Activated CD4-positive, alpha-beta T cell treated with anti-CD3 and anti-CD28 coated beads for 36 hours (primary cell): ENCODE measurements at regions of chr14 and their contacts with region 1.

Region 1: DNA sequence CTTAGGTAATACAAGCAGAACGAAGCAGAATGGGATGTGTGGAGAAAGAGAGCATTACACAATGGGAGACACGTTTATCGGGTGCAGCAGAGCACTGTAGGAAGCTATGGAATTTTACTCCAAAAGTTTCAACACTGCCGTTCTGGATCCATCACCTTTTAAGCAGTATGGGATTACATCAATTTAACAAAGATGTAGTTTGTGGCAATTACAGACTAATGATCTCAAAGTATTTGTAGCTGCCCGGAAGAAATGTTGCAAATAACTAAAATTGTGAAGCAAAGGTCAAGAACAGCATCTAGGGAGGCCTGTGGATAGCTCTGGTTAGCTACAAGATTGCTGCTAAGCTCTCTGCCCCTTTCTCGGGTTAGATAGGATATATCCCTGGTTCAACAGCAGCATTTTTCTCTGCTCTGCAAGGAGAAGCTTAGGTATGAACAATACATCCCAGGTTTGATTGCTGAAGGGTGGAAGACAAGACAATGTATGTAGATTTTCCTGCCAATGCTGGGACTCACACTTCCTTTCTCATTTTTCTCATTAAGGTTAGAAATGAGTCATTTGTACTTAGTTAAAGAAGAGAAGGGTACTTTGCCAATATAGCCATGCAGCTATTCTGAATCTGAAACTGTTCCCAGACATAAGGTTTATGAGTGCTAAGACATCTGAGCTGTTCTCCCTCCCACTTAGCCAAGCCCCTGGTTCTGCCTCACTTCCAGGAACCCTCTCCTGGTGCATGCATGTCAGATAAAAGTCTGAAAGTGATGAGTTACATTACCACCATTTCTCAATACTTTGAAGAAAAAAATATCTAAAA is 75.0 kb upstream of the HIF1A start:
- DNase-seq: peak; percentile 82
- ATAC-seq: peak; percentile 91
- H3K4me3 Mint-ChIP-seq: no peak overlapping the region
- H3K27ac Mint-ChIP-seq: peak overlapping the region; percentile 81
- H3K4me1 Mint-ChIP-seq: peaks cover 79% of the 10 kb centered on the region
- H3K27me3 Mint-ChIP-seq: no peaks in the 10 kb centered on the region

Region 2: DNA sequence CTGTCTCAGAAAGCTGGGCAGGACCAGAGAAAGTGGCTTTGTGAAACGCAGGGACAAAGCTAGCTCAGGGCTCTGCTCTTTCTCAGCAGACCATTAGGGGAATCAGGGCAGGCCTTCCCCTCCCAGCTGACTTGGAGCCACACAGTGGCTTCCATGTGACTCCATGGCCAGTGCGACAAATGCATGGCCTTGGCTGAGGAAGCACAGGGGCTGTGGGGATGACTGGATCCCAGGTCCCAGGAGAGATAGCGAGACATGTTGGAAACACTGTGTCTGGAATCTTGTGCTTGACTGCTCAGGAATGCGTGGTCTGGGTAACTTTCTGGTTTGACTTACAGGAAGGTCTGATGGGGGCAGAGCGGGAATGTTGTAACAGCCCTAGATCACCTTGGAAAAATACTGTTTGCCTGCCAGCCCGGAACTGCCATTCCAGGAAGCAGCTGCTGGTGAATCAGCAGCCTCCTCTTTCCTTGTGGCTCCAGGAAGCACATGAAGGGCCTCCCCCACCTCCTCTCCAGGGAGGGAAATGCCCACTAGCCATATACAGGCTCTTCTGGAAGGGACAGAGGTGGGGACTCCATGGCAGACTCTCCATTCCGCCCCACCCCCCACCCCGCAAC is 58.6 kb before region 1 on chr14:
- CTCF ChIA-PET with region 1: no interaction called
- POLR2A ChIA-PET with region 1: no interaction called
- intact Hi-C with region 1: loop called in 1 of 2 experiments (anchors 2 kb)
- DNase-seq: no peak
- ATAC-seq: no peak
- H3K4me3 Mint-ChIP-seq: no peak overlapping the region
- H3K27ac Mint-ChIP-seq: peak overlapping the region; percentile 81
- H3K4me1 Mint-ChIP-seq: peaks cover 62% of the 10 kb centered on the region
- H3K27me3 Mint-ChIP-seq: no peaks in the 10 kb centered on the region

Region 3: DNA sequence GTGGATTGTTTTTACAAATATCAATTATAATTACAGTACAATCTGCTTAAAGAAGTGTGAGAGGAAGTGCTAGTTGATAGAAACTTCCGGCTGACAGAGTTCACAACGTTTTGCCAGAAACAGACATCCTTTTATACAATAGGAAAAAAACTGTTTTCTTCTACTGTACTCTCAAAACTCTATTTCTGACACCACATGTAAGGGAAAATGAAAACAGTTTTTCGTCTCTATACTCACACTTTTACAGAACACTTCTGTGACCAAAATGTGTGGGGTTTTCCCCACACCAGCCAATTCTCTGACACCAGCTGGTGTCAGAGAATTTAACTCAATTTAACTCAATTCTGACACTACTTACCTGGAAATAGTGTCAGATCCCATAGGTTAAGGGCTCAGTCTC is 50.7 kb after region 1 on chr14:
- CTCF ChIA-PET with region 1: no interaction called
- POLR2A ChIA-PET with region 1: no interaction called
- intact Hi-C with region 1: loop called in 1 of 2 experiments (anchors 2 kb)
- DNase-seq: peak; percentile 66
- ATAC-seq: peak; percentile 85
- H3K4me3 Mint-ChIP-seq: no peak overlapping the region
- H3K27ac Mint-ChIP-seq: no peak overlapping the region
- H3K4me1 Mint-ChIP-seq: peaks cover 25% of the 10 kb centered on the region
- H3K27me3 Mint-ChIP-seq: no peaks in the 10 kb centered on the region